GM12878 (cell line): ENCODE measurements at regions of chr2 and their contacts with region 1.

Region 1: DNA sequence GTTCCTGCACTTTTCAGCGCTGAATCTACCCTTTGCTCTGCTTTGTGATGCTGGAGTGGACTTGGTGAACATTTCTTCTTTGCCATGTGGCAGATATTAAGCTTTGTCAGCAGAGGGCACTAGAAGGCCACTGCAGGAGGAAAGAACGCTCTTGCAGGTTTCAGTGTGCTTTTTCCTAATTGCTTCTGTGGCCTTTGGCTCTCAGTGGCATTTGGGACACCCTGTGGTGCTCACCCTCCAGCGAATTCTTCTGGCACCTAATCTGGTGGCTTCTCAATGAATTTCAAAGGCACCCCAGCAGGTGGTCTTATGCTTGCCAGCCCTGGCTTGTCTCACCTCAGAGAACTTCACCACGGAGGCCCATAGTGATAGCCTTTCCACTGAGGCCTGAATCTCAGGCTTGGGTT is 146.7 kb downstream of the MYO3B start:
- DNase-seq: no peak
- ATAC-seq: peak; percentile 89
- H3K4me3 ChIP-seq: no peak overlapping the region
- H3K27ac ChIP-seq: no peak overlapping the region
- H3K4me1 ChIP-seq: no peaks in the 10 kb centered on the region
- H3K27me3 ChIP-seq: no peaks in the 10 kb centered on the region
- CTCF ChIP-seq: peak; percentile 80 to 88 (median 84)
- EP300 ChIP-seq: no peak
- POLR2A ChIP-seq: no peak
- RAD21 ChIP-seq: peak; percentile 97

Region 2: GRCh38 chr2:170313347-170313991 is 11.2 kb before region 1 on chr2:
- CTCF ChIA-PET with region 1: interaction called, 13 read pairs
- POLR2A ChIA-PET with region 1: no interaction called
- RAD21 ChIA-PET with region 1: interaction called, 3 read pairs
- SMC1A ChIA-PET with region 1: interaction called, 25 read pairs
- in situ Hi-C with region 1: no loop called
- intact Hi-C with region 1: no loop called
- DNase-seq: no peak
- ATAC-seq: no peak
- H3K4me3 ChIP-seq: no peak overlapping the region
- H3K27ac ChIP-seq: no peak overlapping the region
- H3K4me1 ChIP-seq: no peaks in the 10 kb centered on the region
- H3K27me3 ChIP-seq: no peaks in the 10 kb centered on the region
- CTCF ChIP-seq: no peak
- EP300 ChIP-seq: no peak
- POLR2A ChIP-seq: no peak
- RAD21 ChIP-seq: no peak

Region 3: GRCh38 chr2:170341684-170342623 is 17.3 kb after region 1 on chr2:
- CTCF ChIA-PET with region 1: interaction called, 51 read pairs
- POLR2A ChIA-PET with region 1: no interaction called
- RAD21 ChIA-PET with region 1: interaction called, 21 read pairs
- SMC1A ChIA-PET with region 1: interaction called, 20 read pairs
- in situ Hi-C with region 1: no loop called
- intact Hi-C with region 1: no loop called
- DNase-seq: no peak
- ATAC-seq: no peak
- H3K4me3 ChIP-seq: no peak overlapping the region
- H3K27ac ChIP-seq: no peak overlapping the region
- H3K4me1 ChIP-seq: peaks cover 29% of the 10 kb centered on the region
- H3K27me3 ChIP-seq: no peaks in the 10 kb centered on the region
- CTCF ChIP-seq: no peak
- EP300 ChIP-seq: no peak
- POLR2A ChIP-seq: no peak
- RAD21 ChIP-seq: no peak

Region 4: GRCh38 chr2:170369894-170370293 is 45.3 kb after region 1 on chr2:
- CTCF ChIA-PET with region 1: interaction called, 89 read pairs
- POLR2A ChIA-PET with region 1: no interaction called
- RAD21 ChIA-PET with region 1: interaction called, 7 read pairs
- SMC1A ChIA-PET with region 1: interaction called, 7 read pairs
- in situ Hi-C with region 1: no loop called
- intact Hi-C with region 1: no loop called
- DNase-seq: no peak
- ATAC-seq: 0 out of 3 replicates have a peak, but pooled peaks have one; percentile 36
- H3K4me3 ChIP-seq: no peak overlapping the region
- H3K27ac ChIP-seq: no peak overlapping the region
- H3K4me1 ChIP-seq: no peaks in the 10 kb centered on the region; the same call in 1 of the 2 replicates
- H3K27me3 ChIP-seq: no peaks in the 10 kb centered on the region; a peak in 1 of 4 replicates
- CTCF ChIP-seq: peak in 1 of 3 experiments; percentile 36; a peak in 1 of 6 replicates
- EP300 ChIP-seq: no peak
- POLR2A ChIP-seq: no peak
- RAD21 ChIP-seq: peak; percentile 24; the same call in 1 of the 2 replicates

Region 5: GRCh38 chr2:170455617-170456426 is 131.2 kb after region 1 on chr2:
- CTCF ChIA-PET with region 1: no interaction called
- POLR2A ChIA-PET with region 1: no interaction called
- RAD21 ChIA-PET with region 1: no interaction called
- SMC1A ChIA-PET with region 1: no interaction called
- in situ Hi-C with region 1: no loop called
- intact Hi-C with region 1: no loop called
- DNase-seq: no peak
- ATAC-seq: no peak; the same call in 2 of the 3 replicates
- H3K4me3 ChIP-seq: no peak overlapping the region
- H3K27ac ChIP-seq: no peak overlapping the region
- H3K4me1 ChIP-seq: no peaks in the 10 kb centered on the region
- H3K27me3 ChIP-seq: no peaks in the 10 kb centered on the region
- CTCF ChIP-seq: no peak
- EP300 ChIP-seq: no peak
- POLR2A ChIP-seq: no peak
- RAD21 ChIP-seq: no peak

Region 6: GRCh38 chr2:170836027-170836426 is 511.4 kb after region 1 on chr2:
- CTCF ChIA-PET with region 1: no interaction called
- POLR2A ChIA-PET with region 1: no interaction called
- RAD21 ChIA-PET with region 1: no interaction called
- SMC1A ChIA-PET with region 1: no interaction called
- in situ Hi-C with region 1: no loop called
- intact Hi-C with region 1: no loop called
- DNase-seq: no peak
- ATAC-seq: no peak
- H3K4me3 ChIP-seq: no peak overlapping the region
- H3K27ac ChIP-seq: no peak overlapping the region
- H3K4me1 ChIP-seq: no peaks in the 10 kb centered on the region
- H3K27me3 ChIP-seq: no peaks in the 10 kb centered on the region
- CTCF ChIP-seq: no peak
- EP300 ChIP-seq: no peak
- POLR2A ChIP-seq: no peak
- RAD21 ChIP-seq: no peak

Region 7: DNA sequence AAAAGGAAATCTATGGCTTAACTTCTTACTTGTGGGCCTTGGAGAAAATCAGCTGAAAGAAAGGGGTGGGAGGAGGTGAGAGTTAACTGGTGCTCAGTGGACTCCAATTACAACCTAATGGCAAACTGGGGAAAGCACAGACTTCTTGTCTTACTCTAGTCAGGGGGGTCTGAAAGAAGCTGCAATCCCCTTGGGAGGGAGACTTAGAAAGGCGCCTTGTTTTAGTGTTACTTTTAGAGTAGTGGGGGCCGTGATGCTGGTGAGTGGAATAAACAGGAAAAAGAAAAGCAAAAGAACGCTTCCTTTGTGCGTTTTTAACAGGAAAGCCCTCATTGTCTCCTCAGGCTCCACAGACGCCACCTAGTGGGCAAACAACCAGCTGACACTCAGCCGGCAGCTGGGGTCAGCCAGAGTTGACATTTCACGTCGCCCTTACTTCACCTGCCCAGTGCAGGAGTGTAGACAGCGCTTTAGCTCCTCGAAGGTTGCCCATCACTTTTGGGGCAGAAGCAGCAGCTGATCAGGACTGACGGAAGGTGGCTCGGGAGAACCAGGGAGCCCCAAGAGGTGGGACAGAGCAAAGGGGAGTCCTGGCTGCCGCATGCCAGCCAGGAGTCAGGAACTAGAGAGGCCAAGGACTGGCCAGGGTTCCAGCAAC is 548.5 kb after region 1 on chr2:
- CTCF ChIA-PET with region 1: interaction called, 11 read pairs
- POLR2A ChIA-PET with region 1: no interaction called
- RAD21 ChIA-PET with region 1: interaction called, 4 read pairs
- SMC1A ChIA-PET with region 1: interaction called, 3 read pairs
- in situ Hi-C with region 1: no loop called
- intact Hi-C with region 1: loop called (anchors 1 kb)
- DNase-seq: peak; percentile 24
- ATAC-seq: peak; percentile 99
- H3K4me3 ChIP-seq: peak overlapping the region; percentile 49; the same call in 1 of the 2 replicates
- H3K27ac ChIP-seq: no peak overlapping the region
- H3K4me1 ChIP-seq: no peaks in the 10 kb centered on the region
- H3K27me3 ChIP-seq: no peaks in the 10 kb centered on the region
- CTCF ChIP-seq: peak; percentile 85 to 98 (median 94)
- EP300 ChIP-seq: no peak
- POLR2A ChIP-seq: no peak
- RAD21 ChIP-seq: peak; percentile 66